ENCODE measurements at regions of chr17 and their contacts with region 1.

Region 1: DNA sequence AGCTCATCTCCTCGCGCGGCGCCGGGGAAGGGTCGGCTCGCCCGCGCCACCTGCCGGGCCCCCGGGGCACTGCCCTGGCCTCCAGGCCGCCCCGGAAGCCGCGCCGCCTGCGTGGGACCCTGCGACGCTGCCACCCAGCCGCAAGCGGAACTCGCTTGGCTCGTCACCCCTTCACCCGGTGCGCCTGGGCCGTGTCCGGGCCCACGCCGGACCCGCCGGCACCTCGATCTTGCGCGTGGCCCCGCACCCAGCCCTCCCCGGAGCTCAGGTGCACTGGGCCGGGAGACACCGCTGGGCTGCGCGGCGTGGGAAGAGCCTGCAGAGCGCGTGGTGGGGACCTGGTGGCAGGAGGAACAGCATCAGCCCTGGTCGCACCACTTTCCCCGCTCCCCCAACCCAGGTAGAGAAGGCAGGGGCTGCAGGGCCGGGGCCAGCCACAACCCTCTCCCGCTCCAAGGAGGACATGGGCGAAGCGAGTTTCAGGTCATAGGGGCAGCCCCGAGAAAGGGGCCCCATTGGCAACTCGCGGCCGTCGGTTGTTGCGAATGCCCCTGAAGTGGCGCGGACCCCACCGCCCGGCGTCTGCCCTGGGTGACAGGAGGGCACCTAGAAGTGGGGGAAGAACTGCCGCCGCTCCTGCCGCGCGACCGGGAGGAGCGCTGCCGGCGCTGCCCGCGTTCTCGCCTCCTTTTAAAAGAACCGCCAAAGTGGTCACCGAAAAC is 363 bp upstream of the MIF4GD start:
- DNase-seq: peak; percentile 95
- ATAC-seq: peak; percentile 88

Region 2: GRCh38 chr17:74646231-74646630 is 625.2 kb before region 1 on chr17:
- intact Hi-C with region 1: no loop called
- DNase-seq: no peak
- ATAC-seq: no peak

Region 3: GRCh38 chr17:75046582-75047289 is 224.7 kb before region 1 on chr17 and contains the starts of genes ATP5PD and KCTD2:
- intact Hi-C with region 1: no loop called
- DNase-seq: peak; percentile 98
- ATAC-seq: peak; percentile 99
- total RNA-seq, gene ATP5PD: 863 TPM
- total RNA-seq, gene KCTD2: 26.7 TPM

Region 4: GRCh38 chr17:75289115-75289831 is 17.9 kb after region 1 on chr17 and contains the start of gene SLC25A19:
- intact Hi-C with region 1: loop called (anchors 2 kb)
- DNase-seq: peak; percentile 99
- ATAC-seq: peak; percentile 99
- total RNA-seq, gene SLC25A19: 19.5 TPM